Heart right ventricle (tissue), 16 donors: ENCODE measurements at regions of chr7 and their contacts with region 1.

Region 1: GRCh38 chr7:151705636-151706276 is 171.2 kb downstream of the PRKAG2 start:
- DNase-seq: peak in 1 of 2 donors; percentile 53
- ATAC-seq: peak; percentile 21 to 72 (median 56)
- H3K4me3 ChIP-seq: peak overlapping the region in 5 of 10 donors; percentile 4 to 26 (median 18)
- H3K27ac ChIP-seq: peak overlapping the region in 3 of 10 donors; percentile 17 to 38 (median 35)
- H3K4me1 ChIP-seq: peaks cover 5 to 47% (median 31%) of the 10 kb centered on the region in 9 donors
- H3K27me3 ChIP-seq: no peaks in the 10 kb centered on the region
- CTCF ChIP-seq: peak; percentile 21 to 67 (median 54)

Region 2: GRCh38 chr7:151570366-151570915 is 135.3 kb before region 1 on chr7:
- intact Hi-C with region 1: loop called in 1 of 10 experiments (anchors 5 kb)
- DNase-seq: no peak
- ATAC-seq: no peak
- H3K4me3 ChIP-seq: no peak overlapping the region
- H3K27ac ChIP-seq: no peak overlapping the region
- H3K4me1 ChIP-seq: peaks cover 0 to 11% (median 9%) of the 10 kb centered on the region in 9 donors
- H3K27me3 ChIP-seq: no peaks in the 10 kb centered on the region
- CTCF ChIP-seq: peak in 8 of 9 donors; percentile 8 to 66 (median 54)